ENCODE measurements at regions of chrX and their contacts with region 1.

Region 1: DNA sequence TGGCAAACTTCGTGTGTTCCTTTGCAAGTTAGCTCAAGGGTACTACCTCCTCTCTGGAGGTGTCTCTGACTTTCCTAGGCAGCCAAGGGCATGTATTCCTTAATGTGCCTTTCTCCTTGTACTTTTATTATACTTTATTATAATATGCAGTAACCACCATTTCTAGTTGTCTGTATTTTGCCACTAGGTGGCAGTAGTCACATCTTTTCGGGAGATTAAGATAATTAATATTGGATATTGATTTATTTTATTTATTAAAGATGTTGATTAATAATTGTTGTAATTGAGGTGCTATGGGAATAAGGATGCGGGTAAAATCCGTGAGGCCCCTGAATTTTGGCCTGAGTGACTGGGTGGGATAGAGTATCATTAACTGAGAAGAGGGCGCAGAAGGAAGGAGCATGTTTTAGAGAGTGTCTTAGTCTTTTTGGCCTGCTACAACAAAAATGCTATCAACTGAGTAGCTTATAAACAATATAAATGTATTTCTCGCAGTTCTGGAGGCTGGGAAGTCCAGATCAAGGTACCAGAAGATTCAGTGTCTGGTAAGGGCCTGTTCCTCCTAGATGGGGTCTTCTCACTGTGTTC is 153.3 kb downstream of the TMEM164 start:
- DNase-seq: no peak
- H3K4me3 ChIP-seq: no peak overlapping the region
- CTCF ChIP-seq: no peak

Region 2: GRCh38 chrX:109952984-109953905 is 203.0 kb before region 1 on chrX:
- CTCF ChIA-PET with region 1: no interaction called
- POLR2A ChIA-PET with region 1: no interaction called
- DNase-seq: no peak
- H3K4me3 ChIP-seq: no peak overlapping the region
- CTCF ChIP-seq: no peak

Region 3: DNA sequence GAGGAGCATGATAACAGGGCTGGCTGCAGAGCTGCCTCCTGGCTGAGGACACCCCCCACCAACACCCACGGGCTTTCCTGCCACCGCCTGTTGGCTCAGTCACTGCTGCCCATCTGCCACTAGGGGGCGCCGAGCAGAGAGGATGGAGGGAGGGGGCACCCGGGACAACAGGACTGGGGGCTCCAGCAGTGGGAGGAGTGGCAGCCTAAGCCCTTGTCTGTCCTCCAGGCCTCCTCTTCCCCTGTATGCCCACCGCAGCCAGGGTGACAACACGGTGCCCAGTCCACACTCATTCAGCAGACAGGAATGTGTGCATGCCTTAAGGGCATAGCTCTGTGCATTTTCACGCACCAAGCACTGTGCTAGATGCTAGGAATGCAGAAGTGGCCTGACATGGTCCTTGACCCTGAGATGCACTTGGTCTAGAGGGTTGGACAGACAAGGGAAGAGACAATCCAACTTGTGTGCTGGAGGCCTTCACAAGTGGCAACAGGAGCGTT is 11.7 kb after region 1 on chrX:
- CTCF ChIA-PET with region 1: interaction called, 14 read pairs
- POLR2A ChIA-PET with region 1: no interaction called
- DNase-seq: no peak
- H3K4me3 ChIP-seq: no peak overlapping the region
- CTCF ChIP-seq: peak; percentile 55

Region 4: DNA sequence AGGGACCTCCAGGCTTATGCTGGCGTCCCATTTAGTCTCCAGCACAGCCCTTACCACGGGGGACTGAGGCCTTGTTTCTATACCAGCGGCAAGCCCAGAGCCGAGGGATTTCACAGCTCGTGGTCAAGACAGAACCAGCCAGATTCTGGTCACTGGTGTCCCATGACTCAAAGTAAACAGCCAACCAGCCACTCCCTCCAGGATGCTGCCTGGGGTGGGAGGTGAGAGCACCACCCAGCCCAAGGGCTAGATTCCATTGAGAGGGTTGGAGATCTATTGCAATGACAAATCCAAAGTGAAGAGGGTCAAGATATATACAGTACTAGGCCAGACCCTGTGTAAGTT is 17.6 kb after region 1 on chrX:
- CTCF ChIA-PET with region 1: interaction called, 15 read pairs
- POLR2A ChIA-PET with region 1: no interaction called
- DNase-seq: no peak
- H3K4me3 ChIP-seq: no peak overlapping the region
- CTCF ChIP-seq: no peak

Measured in AG04449 (cell line).